Adrenal gland (tissue), 19 donors: ENCODE measurements at regions of chr12 and their contacts with region 1.

Region 1: DNA sequence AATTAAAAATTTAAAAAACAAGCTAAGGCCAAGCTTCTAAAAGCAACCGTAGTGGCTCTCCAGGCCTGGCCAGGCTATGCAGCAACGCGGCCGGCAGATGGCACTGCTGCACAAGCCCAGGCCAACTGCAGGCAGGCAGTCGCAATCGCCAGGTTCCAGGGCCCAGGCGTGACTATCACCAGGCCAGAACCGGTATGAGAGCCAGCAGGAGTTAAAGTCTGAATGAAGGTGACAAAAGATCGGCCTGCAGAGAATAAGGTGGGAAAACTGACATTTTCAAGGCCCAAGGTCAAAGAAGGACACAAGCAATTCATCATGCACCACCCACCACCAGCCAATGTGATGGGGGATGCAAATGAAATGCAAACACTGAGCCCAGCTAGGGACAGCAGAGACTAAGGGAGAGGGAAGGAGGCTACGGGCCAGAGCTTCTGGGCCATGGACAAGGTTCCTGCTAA is 43.6 kb upstream of the ANO2 start:
- DNase-seq: peak; percentile 70 to 90 (median 84)
- H3K4me3 ChIP-seq: no peak overlapping the region
- H3K27ac ChIP-seq: no peak overlapping the region
- H3K4me1 ChIP-seq: no peaks in the 10 kb centered on the region
- H3K27me3 ChIP-seq: no peaks in the 10 kb centered on the region
- CTCF ChIP-seq: peak; percentile 92 to 97 (median 96)
- POLR2A ChIP-seq: no peak

Region 2: DNA sequence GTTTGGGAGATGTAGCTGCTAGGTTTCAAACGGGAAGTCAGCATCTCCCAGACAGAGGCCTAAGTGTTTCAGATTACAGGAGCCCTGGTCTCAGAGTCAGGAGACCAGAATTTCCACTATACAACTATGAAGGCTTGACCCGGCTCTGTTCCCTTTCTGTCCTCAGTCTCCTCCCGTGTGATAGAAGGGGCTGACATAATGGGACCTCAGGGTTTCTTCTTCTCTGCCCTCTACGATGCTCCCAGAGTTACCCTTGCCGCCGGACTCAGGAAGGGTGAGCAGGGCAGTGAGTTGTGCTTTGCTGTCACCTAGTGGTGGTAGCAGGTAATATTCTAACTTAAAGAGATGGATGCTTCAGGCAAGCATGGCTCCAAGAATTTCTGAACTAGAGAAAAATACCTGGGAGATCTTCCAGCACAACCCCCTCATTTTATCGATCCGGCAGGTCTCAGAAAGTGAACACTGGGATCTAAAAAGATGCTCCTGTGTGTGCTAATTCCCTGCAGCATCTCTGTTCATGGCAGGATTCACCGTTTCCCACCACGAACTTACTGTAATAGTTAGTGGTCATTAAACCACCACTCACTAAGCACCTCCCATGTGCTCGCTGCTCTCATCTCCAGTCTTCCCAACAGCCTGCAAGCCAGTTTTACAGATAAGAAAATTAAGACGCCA is 51.3 kb after region 1 on chr12:
- intact Hi-C with region 1: loop called (anchors 5 kb)
- DNase-seq: peak; percentile 46 to 80 (median 70)
- H3K4me3 ChIP-seq: no peak overlapping the region
- H3K27ac ChIP-seq: no peak overlapping the region
- H3K4me1 ChIP-seq: no peaks in the 10 kb centered on the region
- H3K27me3 ChIP-seq: no peaks in the 10 kb centered on the region
- CTCF ChIP-seq: peak; percentile 91 to 96 (median 94)
- POLR2A ChIP-seq: no peak

Region 3: GRCh38 chr12:6278439-6279255 is 290.0 kb after region 1 on chr12:
- intact Hi-C with region 1: loop called in 1 of 2 experiments (anchors 5 kb)
- DNase-seq: peak; percentile 86 to 92 (median 89)
- H3K4me3 ChIP-seq: peak overlapping the region in 2 of 4 donors; percentile 23 to 69
- H3K27ac ChIP-seq: peak overlapping the region; percentile 1 to 92 (median 85)
- H3K4me1 ChIP-seq: peaks cover 17 to 29% of the 10 kb centered on the region in 2 donors
- H3K27me3 ChIP-seq: no peaks in the 10 kb centered on the region
- CTCF ChIP-seq: peak in 5 of 6 experiments; percentile 35 to 100 (median 95)
- POLR2A ChIP-seq: peak in 1 of 2 donors; percentile 60